Activated T-helper 2 cell treated with anti-CD3 and anti-CD28 coated beads, Interferon-gamma antibody, Interleukin-2, Interleukin-4, amounts not matched to agents 10 μg/mL and 5 μg/mL and 100 μg/mL, durations not matched to agents 14 hours and 24 hours and 36 hours (primary cell): ENCODE measurements at regions of chr19 and their contacts with region 1.

Region 1: GRCh38 chr19:48637170-48637947 is at the start of gene DBP:
- DNase-seq: peak; percentile 99
- H3K4me3 Mint-ChIP-seq: peak within 1 kb of the TSS; percentile 83
- H3K27ac Mint-ChIP-seq: peak within 1 kb of the TSS; percentile 98
- H3K4me1 Mint-ChIP-seq: peaks cover 33% of the 10 kb centered on the region
- H3K27me3 Mint-ChIP-seq: peaks cover 4% of the 10 kb centered on the region
- total RNA-seq, gene DBP: 7.3 and 7.9 TPM in 2 replicates

Region 2: GRCh38 chr19:48618916-48619691 is 18.3 kb before region 1 on chr19 and contains the starts of genes RPL18 and SPHK2:
- intact Hi-C with region 1: loop called (anchors 1 kb)
- DNase-seq: peak; percentile 95
- H3K4me3 Mint-ChIP-seq: peak within 1 kb of the TSS; percentile 95
- H3K27ac Mint-ChIP-seq: peak within 1 kb of the TSS; percentile 99
- H3K4me1 Mint-ChIP-seq: peaks cover 34% of the 10 kb centered on the region
- H3K27me3 Mint-ChIP-seq: no peaks in the 10 kb centered on the region
- total RNA-seq, gene RPL18: 1,853 and 1,861 TPM in 2 replicates
- total RNA-seq, gene SPHK2: 34.3 and 35.0 TPM in 2 replicates

Region 3: DNA sequence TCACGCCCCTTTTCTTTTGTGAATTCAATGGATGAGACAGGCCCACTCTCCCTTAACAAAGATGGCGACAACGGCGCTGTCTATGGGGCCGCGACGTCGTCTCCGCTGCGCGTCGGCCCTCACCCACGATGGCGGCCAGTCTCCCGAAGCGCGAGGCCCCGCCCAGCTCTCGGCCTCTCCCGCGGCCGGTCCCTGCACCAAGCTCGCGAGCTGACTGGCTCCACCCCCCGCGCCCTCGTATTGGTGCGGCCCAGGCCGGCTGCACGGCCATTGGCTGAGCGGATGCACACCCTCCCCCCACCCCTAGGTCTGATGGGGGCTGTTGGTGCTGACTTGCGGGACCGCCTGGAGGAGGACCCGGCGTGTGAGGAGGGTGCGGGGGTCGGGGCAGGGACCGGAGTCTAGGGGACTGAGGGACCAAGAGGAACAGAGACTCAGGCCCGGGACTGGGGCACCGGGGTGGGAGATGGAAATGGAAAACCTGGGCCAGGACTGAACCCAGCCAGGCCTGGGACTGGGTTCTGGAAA is 13.2 kb before region 1 on chr19:
- intact Hi-C with region 1: loop called (anchors 1 kb)
- DNase-seq: peak; percentile 96
- H3K4me3 Mint-ChIP-seq: peak overlapping the region; percentile 84
- H3K27ac Mint-ChIP-seq: peak overlapping the region; percentile 97
- H3K4me1 Mint-ChIP-seq: peaks cover 36% of the 10 kb centered on the region
- H3K27me3 Mint-ChIP-seq: no peaks in the 10 kb centered on the region

Region 4: DNA sequence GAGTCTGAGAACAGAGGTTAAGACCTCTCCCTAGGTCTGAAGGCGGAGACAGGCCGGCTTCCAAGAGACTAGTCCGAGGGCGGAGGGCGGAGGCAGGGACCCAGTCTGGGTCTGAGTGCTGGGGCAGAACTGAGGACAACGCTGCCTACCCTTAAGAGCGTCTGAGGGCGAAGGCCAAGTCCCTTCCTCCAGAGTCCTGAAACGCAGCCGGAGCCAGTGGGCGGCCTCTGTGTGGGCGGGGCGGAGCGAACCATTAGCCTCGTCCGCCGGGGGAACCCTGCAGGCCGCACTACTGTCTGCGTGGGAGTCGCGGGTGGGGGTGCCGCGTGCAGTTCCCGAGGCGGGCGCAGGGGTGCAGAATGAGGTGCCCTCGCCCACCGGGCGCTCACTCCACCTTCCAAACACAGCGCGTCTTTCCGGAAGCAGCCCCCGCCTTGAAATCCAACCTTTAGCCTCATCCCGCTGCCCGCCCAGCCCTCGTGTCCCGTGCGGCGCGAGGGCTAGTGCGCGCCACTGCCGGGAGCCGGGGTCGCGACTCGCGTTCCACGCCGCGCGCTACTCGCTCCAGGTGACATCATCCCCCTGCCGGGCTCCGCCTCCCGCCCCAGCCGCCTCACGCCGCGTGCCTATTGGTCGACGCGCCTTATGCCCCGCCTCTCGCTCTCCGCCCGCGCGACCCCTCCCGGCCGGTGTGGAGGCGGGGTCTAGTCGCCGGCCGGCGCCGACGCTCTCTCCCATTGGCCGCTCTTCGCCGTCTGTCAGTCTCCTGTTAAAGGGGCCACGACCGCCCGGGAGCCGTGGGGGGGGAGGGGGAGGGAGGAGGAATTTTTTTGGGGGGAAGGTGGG is 481.4 kb after region 1 on chr19 and contains the start of gene C19orf73:
- intact Hi-C with region 1: loop called (anchors 5 kb)
- DNase-seq: peak; percentile 93
- H3K4me3 Mint-ChIP-seq: peak within 1 kb of the TSS; percentile 80
- H3K27ac Mint-ChIP-seq: peak within 1 kb of the TSS; percentile 74
- H3K4me1 Mint-ChIP-seq: peaks cover 17% of the 10 kb centered on the region
- H3K27me3 Mint-ChIP-seq: peaks cover 23% of the 10 kb centered on the region
- total RNA-seq, gene C19orf73: 1.7 and 2.3 TPM in 2 replicates